PC-3 (cell line): ENCODE measurements at regions of chr7 and their contacts with region 1.

Region 1: GRCh38 chr7:80918909-80919662 is at the start of gene SEMA3C:
- DNase-seq: peak; percentile 95
- ATAC-seq: peak; percentile 73
- H3K4me3 ChIP-seq: peak within 1 kb of the TSS; percentile 96
- H3K27ac ChIP-seq: peak within 1 kb of the TSS; percentile 98
- H3K4me1 ChIP-seq: peaks cover 71% of the 10 kb centered on the region
- H3K27me3 ChIP-seq: no peaks in the 10 kb centered on the region
- CTCF ChIP-seq: no peak
- total RNA-seq, gene SEMA3C: 27.4 and 28.0 TPM in 2 replicates

Region 2: DNA sequence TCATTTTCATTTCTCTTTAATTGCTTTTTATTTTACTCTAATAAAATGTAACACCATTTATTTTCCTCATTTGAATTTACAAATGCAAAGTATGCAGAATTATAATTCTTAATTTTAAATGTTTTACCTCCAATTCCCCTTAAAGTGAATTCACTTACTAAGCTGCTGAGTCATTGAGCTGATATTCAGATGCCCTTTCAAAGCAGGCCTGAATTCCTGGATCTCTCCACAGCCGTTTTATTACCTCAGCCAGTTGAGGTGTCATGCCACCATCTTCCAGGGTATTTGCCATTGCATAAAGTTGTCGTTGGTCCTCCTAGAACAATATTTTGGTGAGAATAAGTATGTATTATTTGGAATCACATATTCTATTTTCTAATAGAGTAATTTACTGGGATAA is 440.4 kb before region 1 on chr7:
- CTCF ChIA-PET with region 1: no interaction called
- POLR2A ChIA-PET with region 1: no interaction called
- intact Hi-C with region 1: no loop called
- DNase-seq: peak; percentile 74
- ATAC-seq: no peak
- H3K4me3 ChIP-seq: no peak overlapping the region
- H3K27ac ChIP-seq: 0 out of 2 replicates have a peak overlapping the region, but pooled peaks have one; percentile 9
- H3K4me1 ChIP-seq: peaks cover 44% of the 10 kb centered on the region
- H3K27me3 ChIP-seq: no peaks in the 10 kb centered on the region
- CTCF ChIP-seq: no peak

Region 3: DNA sequence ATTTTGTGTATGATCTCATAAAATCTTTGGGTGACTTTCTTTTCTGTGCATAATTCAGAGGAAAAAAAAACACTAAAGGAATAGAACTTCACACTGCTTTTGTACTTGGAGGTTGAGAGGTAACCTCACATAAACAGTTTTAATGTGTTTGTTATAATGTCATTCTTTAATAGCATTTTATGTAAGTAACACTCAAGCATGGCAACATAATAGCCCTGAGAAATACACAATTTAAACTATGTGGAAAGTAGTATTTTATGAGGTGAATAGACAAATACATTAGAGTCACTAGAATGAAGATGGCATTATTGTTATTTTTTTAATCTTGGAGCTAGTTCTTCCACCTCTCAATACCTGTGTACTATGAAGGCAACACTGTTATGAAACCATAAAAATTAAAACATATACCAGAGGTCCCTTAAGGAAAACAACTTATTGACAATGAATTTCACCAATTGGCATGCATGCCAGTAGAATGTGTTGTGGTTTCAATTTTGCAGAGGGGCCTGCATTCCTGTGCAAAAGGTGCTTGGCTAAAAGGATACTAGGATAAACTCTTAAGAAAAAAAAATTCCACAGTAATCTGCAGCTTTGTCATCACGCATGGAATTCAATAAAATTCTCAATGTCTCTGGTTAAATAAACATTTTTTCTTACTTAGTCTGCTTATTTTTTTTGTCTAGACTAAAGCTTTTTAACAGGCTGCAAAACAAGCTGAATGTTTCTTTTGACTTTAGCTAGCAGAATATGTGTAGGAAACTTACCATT is 178.1 kb before region 1 on chr7:
- CTCF ChIA-PET with region 1: interaction called, 12 read pairs
- POLR2A ChIA-PET with region 1: interaction called, 3 read pairs
- intact Hi-C with region 1: no loop called
- DNase-seq: peak; percentile 63
- ATAC-seq: peak; percentile 77
- H3K4me3 ChIP-seq: peak overlapping the region; percentile 22; the same call in 1 of the 2 replicates
- H3K27ac ChIP-seq: peak overlapping the region; percentile 39
- H3K4me1 ChIP-seq: peaks cover 28% of the 10 kb centered on the region
- H3K27me3 ChIP-seq: no peaks in the 10 kb centered on the region
- CTCF ChIP-seq: no peak

Region 4: GRCh38 chr7:80941208-80941758 is 22.2 kb after region 1 on chr7:
- CTCF ChIA-PET with region 1: interaction called, 7 read pairs
- POLR2A ChIA-PET with region 1: interaction called, 26 read pairs
- intact Hi-C with region 1: loop called (anchors 1 kb)
- DNase-seq: peak; percentile 86
- ATAC-seq: no peak
- H3K4me3 ChIP-seq: peak overlapping the region; percentile 25; the same call in 1 of the 2 replicates
- H3K27ac ChIP-seq: peak overlapping the region; percentile 99
- H3K4me1 ChIP-seq: peaks cover 41% of the 10 kb centered on the region
- H3K27me3 ChIP-seq: no peaks in the 10 kb centered on the region
- CTCF ChIP-seq: no peak

Region 5: DNA sequence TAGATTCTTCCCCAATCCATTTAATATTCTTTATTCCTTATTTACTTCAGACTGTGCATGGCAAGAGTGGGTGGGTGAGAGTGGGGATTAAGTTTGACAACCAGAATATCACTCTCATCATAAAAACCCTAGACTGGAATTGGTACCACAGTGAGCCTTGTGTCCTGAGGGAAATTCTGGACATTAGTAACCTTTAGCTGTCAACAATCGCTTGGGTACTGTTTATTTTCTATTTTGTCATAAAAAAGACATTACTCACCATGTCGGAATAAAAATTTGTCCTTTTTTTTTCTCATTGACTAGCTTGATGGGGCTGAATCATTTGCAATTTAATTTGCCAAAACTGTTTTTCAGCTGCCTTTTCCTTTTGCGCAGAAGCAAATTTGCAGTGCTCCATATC is 175.9 kb after region 1 on chr7:
- CTCF ChIA-PET with region 1: no interaction called
- POLR2A ChIA-PET with region 1: interaction called, 4 read pairs
- intact Hi-C with region 1: loop called (anchors 5 kb)
- DNase-seq: peak; percentile 50
- ATAC-seq: peak; percentile 79
- H3K4me3 ChIP-seq: no peak overlapping the region
- H3K27ac ChIP-seq: 0 out of 2 replicates have a peak overlapping the region, but pooled peaks have one; percentile 14
- H3K4me1 ChIP-seq: peaks cover 10% of the 10 kb centered on the region
- H3K27me3 ChIP-seq: no peaks in the 10 kb centered on the region
- CTCF ChIP-seq: no peak

Region 6: DNA sequence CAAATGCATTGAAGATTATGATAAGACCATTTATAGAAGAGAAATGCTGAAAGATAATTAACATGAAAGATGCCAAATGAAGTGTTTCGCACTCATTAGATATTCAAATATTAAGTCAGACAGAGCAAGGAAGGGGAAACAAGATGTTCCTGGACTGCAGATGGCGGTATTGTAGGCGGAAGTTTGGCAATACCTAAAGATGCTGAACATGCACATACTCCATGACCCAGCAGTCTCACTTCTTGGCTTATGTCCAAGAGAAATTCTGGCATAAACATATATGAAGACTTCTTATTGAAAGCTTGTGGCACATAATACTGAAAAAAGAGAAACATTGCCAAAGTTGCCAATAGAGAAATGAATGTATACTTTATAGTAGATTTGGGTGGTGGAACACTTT is 325.1 kb after region 1 on chr7:
- CTCF ChIA-PET with region 1: interaction called, 3 read pairs
- POLR2A ChIA-PET with region 1: no interaction called
- intact Hi-C with region 1: loop called (anchors 2 kb)
- DNase-seq: peak; percentile 16
- ATAC-seq: no peak
- H3K4me3 ChIP-seq: no peak overlapping the region
- H3K27ac ChIP-seq: no peak overlapping the region
- H3K4me1 ChIP-seq: peaks cover 12% of the 10 kb centered on the region
- H3K27me3 ChIP-seq: no peaks in the 10 kb centered on the region
- CTCF ChIP-seq: peak; percentile 43; the same call in 1 of the 2 replicates

Region 7: DNA sequence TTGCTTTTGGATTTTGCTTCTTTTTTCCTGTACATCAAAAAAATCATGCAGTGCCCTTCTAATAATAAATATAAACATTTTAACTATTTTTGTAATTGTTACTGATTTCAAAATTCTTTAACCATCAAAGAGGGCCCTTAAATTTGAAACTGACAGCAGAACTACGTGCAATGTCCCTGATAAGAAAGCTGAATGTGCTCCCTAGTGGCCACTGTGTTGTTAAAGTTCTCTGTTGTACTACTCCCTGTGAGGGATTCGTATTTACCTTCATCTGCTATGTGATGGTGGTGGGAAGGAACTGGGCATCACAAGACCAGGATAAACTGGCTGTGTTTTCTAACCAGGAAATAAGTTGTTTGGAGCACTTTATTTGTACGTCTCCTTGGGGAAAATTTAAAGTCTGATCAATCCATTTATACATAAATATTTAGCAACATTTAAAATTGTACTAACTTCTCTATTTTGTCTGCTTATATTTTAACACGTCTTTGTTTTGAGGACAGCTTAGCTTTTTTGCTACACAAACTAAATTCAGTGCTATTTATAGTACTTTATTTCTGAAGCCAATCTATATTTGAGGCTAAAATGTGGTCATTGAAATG is 528.4 kb after region 1 on chr7:
- CTCF ChIA-PET with region 1: interaction called, 4 read pairs
- POLR2A ChIA-PET with region 1: interaction called, 4 read pairs
- intact Hi-C with region 1: loop called (anchors 1 kb)
- DNase-seq: peak; percentile 75
- ATAC-seq: peak; percentile 96
- H3K4me3 ChIP-seq: no peak overlapping the region
- H3K27ac ChIP-seq: no peak overlapping the region
- H3K4me1 ChIP-seq: peaks cover 10% of the 10 kb centered on the region
- H3K27me3 ChIP-seq: no peaks in the 10 kb centered on the region
- CTCF ChIP-seq: peak; percentile 73